ENCODE measurements at regions of chr22 and their contacts with region 1.

Region 1: GRCh38 chr22:49960159-49961004 is at the start of gene PIM3:
- DNase-seq: peak; percentile 89
- ATAC-seq: peak; percentile 79
- H3K4me3 Mint-ChIP-seq: peak within 1 kb of the TSS; percentile 91
- H3K27ac Mint-ChIP-seq: peak within 1 kb of the TSS; percentile 90
- H3K4me1 Mint-ChIP-seq: peaks cover 38% of the 10 kb centered on the region
- H3K27me3 Mint-ChIP-seq: no peaks in the 10 kb centered on the region
- CTCF ChIP-seq: no peak
- total RNA-seq, gene PIM3: 79.8 and 91.7 TPM in 2 replicates

Region 2: GRCh38 chr22:49852898-49853894 is 107.2 kb before region 1 on chr22 and contains the start of gene ZBED4:
- CTCF ChIA-PET with region 1: no interaction called
- POLR2A ChIA-PET with region 1: no interaction called
- intact Hi-C with region 1: loop called (anchors 1 kb)
- DNase-seq: peak; percentile 100
- ATAC-seq: peak; percentile 88
- H3K4me3 Mint-ChIP-seq: peak within 1 kb of the TSS; percentile 93
- H3K27ac Mint-ChIP-seq: peak within 1 kb of the TSS; percentile 89
- H3K4me1 Mint-ChIP-seq: peaks cover 36% of the 10 kb centered on the region
- H3K27me3 Mint-ChIP-seq: peaks cover 16% of the 10 kb centered on the region
- CTCF ChIP-seq: no peak
- total RNA-seq, gene ZBED4: 16.0 and 17.3 TPM in 2 replicates

Region 3: DNA sequence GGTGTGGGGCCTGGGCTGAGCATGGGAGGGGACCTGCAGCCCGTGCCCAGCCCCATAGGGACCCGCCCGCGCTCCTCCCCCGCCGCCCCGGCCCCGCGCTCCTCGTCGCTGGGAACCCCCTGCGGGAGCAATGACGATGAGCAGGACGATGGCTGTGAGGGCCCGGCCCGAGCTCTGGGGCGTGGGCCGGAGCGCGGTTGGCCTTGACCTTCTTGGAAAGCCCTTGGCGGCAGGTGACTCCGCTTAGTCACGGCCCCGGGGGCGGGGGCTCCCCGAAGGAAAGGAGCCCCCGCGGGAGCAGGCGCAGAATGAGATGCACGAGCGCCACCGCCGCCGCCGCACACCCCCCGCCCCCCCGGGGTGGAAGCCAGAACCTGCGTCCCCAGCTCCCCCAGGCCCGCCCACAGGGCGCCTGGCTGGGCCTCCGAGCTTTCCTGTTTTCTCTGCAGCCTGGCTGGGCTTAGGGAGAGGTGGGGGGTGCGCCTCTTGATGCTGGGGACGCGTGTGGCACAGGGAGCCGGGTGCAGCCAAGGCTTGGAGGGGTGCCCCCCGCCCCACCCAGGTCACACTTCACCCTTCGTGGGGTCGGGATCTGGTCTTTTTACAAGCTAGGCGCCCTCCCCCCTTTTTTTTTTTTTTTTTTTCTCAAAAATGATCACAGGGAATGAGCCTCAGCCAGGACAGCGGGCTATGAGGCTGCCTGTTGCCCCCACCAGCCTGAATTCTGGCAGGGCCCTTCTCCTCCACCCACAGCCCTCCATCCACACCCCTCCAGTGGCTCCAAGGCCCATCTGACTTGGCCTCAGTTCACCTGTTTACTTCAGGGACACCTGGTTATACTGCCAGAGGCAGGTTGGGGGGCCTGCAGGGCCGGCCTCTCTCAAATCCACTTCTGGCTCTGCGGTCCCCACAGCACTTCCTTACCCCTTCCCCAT is 24.1 kb before region 1 on chr22:
- CTCF ChIA-PET with region 1: interaction called, 36 read pairs
- POLR2A ChIA-PET with region 1: interaction called, 828 read pairs
- intact Hi-C with region 1: loop called (anchors 1 kb)
- DNase-seq: peak; percentile 92
- ATAC-seq: peak; percentile 75
- H3K4me3 Mint-ChIP-seq: peak overlapping the region; percentile 61
- H3K27ac Mint-ChIP-seq: peak overlapping the region; percentile 82
- H3K4me1 Mint-ChIP-seq: peaks cover 42% of the 10 kb centered on the region
- H3K27me3 Mint-ChIP-seq: no peaks in the 10 kb centered on the region
- CTCF ChIP-seq: no peak

Region 4: DNA sequence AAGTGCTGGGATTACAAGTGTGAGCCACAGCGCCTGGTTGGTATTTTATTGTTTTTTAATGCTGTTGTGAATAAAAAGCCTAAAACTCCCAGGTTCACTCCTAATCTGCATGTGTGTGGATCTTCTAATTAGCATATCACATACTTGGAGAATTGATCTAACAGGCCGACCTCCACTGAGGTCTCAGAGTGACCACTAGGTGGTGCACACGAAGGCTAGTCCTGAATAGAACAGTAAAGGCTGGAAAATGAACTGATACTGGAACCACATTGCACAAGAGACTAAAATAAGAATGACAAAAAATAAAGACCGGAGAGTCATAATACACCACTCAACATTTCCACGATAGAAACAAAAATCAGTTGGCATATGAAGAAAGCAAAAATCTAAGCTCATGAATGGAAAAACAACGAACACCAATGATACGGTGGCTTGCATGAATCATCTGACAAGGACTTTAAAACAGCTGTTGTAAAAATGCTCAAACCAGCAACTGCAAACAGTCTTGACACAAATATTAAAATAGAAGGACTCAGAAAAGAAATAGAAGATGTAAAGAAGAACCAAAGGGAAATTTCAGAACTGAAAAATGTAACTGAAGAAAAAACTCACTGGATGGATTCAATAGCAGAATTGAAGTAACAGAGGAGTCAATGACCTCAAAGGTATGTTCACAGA is 19.3 kb after region 1 on chr22:
- CTCF ChIA-PET with region 1: no interaction called
- POLR2A ChIA-PET with region 1: interaction called, 17 read pairs
- intact Hi-C with region 1: loop called (anchors 1 kb)
- DNase-seq: no peak
- ATAC-seq: no peak
- H3K4me3 Mint-ChIP-seq: no peak overlapping the region
- H3K27ac Mint-ChIP-seq: peak overlapping the region; percentile 14
- H3K4me1 Mint-ChIP-seq: peaks cover 33% of the 10 kb centered on the region
- H3K27me3 Mint-ChIP-seq: peaks cover 2% of the 10 kb centered on the region
- CTCF ChIP-seq: no peak

Region 5: GRCh38 chr22:50544078-50544745 is 583.8 kb after region 1 on chr22:
- CTCF ChIA-PET with region 1: no interaction called
- POLR2A ChIA-PET with region 1: no interaction called
- intact Hi-C with region 1: loop called (anchors 10 kb)
- DNase-seq: peak; percentile 80
- ATAC-seq: peak; percentile 38
- H3K4me3 Mint-ChIP-seq: peak overlapping the region; percentile 60
- H3K27ac Mint-ChIP-seq: peak overlapping the region; percentile 82
- H3K4me1 Mint-ChIP-seq: peaks cover 56% of the 10 kb centered on the region
- H3K27me3 Mint-ChIP-seq: no peaks in the 10 kb centered on the region
- CTCF ChIP-seq: no peak